Heart left ventricle (tissue), 16 donors: ENCODE measurements at regions of chr7 and their contacts with region 1.

Region 1: GRCh38 chr7:50679218-50680007 is 103.3 kb downstream of the GRB10 start:
- DNase-seq: no peak
- ATAC-seq: peak; percentile 72 to 77 (median 73)
- H3K4me3 ChIP-seq: no peak overlapping the region
- H3K27ac ChIP-seq: peak overlapping the region in 2 of 12 donors; percentile 1 to 72
- H3K4me1 ChIP-seq: peaks cover 0 to 80% (median 57%) of the 10 kb centered on the region in 12 donors
- H3K27me3 ChIP-seq: no peaks in the 10 kb centered on the region
- CTCF ChIP-seq: peak in 11 of 12 donors; percentile 21 to 60 (median 47)
- POLR2A ChIP-seq: no peak

Region 2: DNA sequence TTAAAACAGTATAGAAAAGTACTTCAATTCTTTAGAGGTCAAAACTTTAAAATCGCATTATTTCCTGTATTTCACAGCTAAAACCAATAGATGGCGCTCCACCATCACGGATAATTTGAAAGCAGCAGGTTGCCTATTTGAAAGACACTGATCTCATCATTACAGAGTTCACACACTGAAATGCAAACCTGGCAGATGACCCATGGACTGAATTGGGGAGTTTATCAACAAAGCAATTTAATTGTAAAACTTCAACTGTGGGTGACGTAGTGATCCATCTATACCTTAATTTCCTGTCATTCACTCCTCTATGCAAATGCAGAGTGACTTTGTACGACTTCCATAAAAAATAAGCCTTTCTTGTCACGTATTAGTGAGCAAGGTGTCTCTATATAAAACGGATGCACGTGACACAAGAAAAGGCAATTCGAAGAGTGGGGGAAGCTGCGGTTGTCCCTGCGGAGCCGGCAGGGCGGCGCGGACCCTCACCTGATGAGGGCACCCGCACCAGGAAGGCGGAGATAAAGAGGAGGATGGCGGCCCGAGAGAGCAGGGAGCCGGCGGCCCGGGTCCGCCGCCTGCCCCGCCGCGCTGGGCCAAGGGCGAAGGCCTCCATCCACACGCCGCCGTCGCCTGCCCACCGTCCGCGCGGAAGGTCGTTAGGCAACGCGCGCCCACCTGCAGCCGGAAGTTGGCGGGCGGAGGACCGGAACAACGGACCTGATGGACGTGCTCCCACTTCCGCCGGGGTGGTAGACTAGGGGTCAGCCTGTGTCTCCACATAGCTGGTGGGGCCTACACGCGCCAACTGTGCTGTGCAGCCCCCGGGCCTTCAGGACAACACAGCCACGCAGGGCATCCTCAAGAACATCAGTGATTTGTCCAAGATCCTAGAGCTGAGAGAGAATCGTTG is 586.6 kb before region 1 on chr7 and contains the start of gene ZPBP:
- intact Hi-C with region 1: loop called in 1 of 10 experiments (anchors 10 kb)
- DNase-seq: peak in 4 of 5 donors; percentile 10 to 66 (median 24)
- ATAC-seq: peak in 2 of 4 donors; percentile 22 to 38
- H3K4me3 ChIP-seq: peak within 1 kb of the TSS; percentile 22 to 58 (median 46)
- H3K27ac ChIP-seq: no peak within 1 kb of the TSS
- H3K4me1 ChIP-seq: peaks cover 0 to 6% (median 0%) of the 10 kb centered on the region in 12 donors
- H3K27me3 ChIP-seq: peaks cover 0 to 17% (median 0%) of the 10 kb centered on the region in 9 donors
- CTCF ChIP-seq: peak; percentile 55 to 80 (median 70)
- POLR2A ChIP-seq: no peak
- total RNA-seq, gene ZPBP: not detected

Region 3: DNA sequence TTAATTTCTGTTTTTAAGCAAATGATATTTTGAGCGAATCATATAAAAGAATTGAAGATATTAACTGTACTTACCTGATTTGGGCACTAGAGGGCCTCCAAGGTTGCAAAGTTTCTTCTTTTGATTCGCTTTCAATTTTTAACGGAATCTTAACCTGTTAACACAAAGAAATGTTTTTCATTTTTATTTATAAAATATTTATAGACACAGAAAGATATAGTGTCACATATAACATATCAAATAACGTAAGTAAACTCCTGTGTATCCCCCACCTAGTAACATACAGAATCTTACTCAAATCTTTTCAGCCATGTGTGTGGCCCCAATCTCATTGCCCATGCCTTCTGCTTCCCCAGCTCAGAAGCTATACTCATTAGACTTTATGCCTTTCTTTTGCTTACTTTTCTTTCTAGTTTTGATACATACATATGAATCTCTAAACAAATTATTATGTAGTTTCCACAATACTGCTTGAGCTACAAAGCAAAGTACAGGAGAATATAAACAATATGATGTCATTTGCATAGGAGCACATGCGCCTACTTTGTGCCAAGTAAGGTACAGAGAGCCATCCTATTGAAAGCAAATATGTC is 536.9 kb before region 1 on chr7:
- intact Hi-C with region 1: loop called in 1 of 10 experiments (anchors 10 kb)
- DNase-seq: no peak
- ATAC-seq: no peak
- H3K4me3 ChIP-seq: no peak overlapping the region
- H3K27ac ChIP-seq: no peak overlapping the region
- H3K4me1 ChIP-seq: peaks cover 0 to 4% (median 0%) of the 10 kb centered on the region in 12 donors
- H3K27me3 ChIP-seq: peaks cover 0 to 9% (median 0%) of the 10 kb centered on the region in 9 donors
- CTCF ChIP-seq: peak; percentile 54 to 81 (median 72)
- POLR2A ChIP-seq: no peak

Region 4: GRCh38 chr7:50206453-50207250 is 472.8 kb before region 1 on chr7:
- intact Hi-C with region 1: loop called in 1 of 10 experiments (anchors 5 kb)
- DNase-seq: no peak
- ATAC-seq: peak in 3 of 4 donors; percentile 24 to 63 (median 39)
- H3K4me3 ChIP-seq: no peak overlapping the region
- H3K27ac ChIP-seq: peak overlapping the region in 1 of 12 donors; percentile 52
- H3K4me1 ChIP-seq: peaks cover 0 to 48% (median 0%) of the 10 kb centered on the region in 12 donors
- H3K27me3 ChIP-seq: peaks cover 0 to 8% (median 0%) of the 10 kb centered on the region in 9 donors
- CTCF ChIP-seq: no peak
- POLR2A ChIP-seq: no peak

Region 5: DNA sequence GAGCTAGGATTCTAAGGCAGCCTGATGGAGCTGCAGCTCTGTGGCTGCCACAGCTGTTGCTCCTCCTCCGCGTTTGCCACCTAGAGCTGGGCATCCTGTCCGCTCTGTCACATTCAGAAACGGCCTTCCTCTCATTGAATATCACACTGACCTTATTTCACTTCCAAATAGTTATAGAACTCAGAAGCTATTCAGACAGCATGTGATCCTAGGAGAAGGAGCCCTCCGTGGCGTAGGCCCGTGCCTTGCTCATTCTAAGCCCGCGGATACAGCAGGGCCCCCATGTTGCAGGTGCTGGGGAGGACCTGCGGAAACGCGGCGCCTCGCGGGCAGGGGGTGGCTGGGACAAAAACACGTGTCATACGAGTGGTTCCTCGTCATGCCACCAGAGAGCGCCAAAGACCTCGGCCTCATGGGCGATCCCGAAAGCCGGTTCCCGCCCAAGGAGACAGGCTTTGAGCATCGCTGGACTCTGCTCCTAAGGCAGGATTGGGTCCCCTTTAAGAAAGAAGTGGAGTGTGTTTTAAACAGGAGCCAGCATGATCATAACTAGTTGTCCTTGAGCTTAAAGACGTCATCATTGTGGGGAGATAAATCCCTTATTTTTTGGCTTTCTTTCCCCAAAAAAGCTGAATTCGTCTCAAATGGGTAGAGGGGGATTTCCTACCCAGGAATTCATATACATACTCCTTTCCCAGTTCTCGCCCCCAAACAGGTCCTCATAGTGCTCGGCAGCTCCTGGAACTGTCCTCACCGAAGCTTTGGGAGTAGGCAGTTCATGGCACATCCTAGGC is 211.4 kb before region 1 on chr7:
- intact Hi-C with region 1: loop called (anchors 1 to 5 kb)
- DNase-seq: peak; percentile 72 to 89 (median 80)
- ATAC-seq: peak; percentile 70 to 97 (median 90)
- H3K4me3 ChIP-seq: peak overlapping the region in 1 of 12 donors; percentile 12
- H3K27ac ChIP-seq: no peak overlapping the region
- H3K4me1 ChIP-seq: peaks cover 0 to 8% (median 0%) of the 10 kb centered on the region in 12 donors
- H3K27me3 ChIP-seq: peaks cover 0 to 5% (median 0%) of the 10 kb centered on the region in 9 donors
- CTCF ChIP-seq: peak; percentile 85 to 96 (median 89)
- POLR2A ChIP-seq: no peak

Region 6: DNA sequence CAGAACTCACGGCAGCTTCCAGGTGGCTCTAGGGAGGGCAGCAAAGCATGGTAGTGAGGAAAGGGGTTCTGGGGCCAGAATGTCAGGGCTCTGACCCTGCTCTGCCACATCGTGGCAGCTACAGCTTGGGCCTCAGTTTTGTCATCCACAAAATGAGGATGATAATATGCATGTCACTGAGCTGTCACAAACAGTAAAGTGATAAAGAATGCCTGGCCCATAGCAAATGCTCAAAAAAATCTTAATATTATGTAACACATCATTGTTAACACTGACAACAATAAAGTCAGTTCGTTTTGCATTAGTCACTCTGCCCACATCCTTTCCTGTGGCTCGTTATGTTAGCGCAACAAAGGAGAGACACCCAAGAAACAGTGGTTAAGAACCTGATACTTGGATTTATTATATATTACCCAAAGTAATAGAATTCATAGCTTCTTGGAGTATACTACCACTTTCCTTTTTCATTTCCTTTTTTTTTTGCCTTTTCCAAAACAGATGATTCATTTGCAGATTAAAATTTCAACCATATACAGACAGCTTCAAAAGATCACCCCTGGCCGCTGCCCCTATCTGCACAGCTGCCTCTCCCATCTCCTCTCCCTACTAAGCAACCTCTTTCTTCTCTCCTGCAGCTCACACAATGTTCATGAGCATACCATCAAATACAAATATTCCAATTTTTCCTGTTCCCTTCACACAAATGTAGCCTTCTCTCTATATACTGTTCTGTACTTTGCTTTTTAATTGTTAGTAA is 68.7 kb before region 1 on chr7:
- intact Hi-C with region 1: loop called (anchors 2 to 10 kb)
- DNase-seq: no peak
- ATAC-seq: no peak
- H3K4me3 ChIP-seq: no peak overlapping the region
- H3K27ac ChIP-seq: peak overlapping the region in 1 of 12 donors; percentile 62
- H3K4me1 ChIP-seq: peaks cover 0 to 27% (median 0%) of the 10 kb centered on the region in 12 donors
- H3K27me3 ChIP-seq: no peaks in the 10 kb centered on the region
- CTCF ChIP-seq: no peak
- POLR2A ChIP-seq: no peak

Region 7: DNA sequence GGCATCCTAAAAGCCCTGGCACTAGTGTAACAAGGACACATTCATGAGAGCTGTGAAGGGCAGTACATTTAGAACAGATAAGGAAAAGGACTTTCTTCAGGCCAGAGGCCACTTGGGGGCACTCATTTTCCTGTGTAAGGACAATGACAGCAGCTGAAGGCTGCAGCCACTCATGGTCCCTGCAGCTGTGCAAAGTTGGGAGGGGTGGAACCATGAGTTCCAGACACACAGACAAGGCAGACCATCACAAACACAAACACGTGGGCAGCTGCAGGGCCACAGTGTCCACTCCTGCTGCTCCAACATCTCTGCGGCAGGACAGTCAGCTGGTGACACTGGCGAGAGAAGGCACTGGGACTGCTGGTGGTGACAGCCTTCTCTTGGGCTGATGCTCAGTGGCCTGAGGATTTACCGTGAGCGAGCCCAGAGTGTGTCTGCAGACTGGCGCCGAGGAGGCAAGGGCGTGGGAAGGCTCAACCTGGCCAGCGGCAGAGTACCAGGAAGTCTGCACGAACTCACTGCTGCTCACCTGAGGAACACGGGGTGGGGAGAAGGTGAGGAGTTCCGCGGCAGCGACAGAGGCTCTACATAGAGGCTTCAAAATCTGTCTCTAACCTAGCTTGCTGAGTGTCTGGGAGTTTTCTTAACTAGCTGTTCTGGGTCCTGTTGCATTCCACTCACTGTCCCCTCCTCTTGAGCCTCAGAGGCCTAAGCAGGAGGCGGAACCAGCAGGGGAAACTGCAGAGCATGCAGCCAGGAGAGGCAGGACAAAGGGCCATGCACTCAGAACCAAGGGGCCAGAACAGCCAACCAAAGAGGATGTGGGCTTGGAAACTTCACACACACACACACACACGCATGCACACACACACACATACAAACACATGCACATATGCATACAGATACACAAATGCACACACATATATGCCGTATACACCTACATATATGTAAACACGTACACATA is 37.7 kb before region 1 on chr7:
- intact Hi-C with region 1: loop called in 1 of 10 experiments (anchors 5 kb)
- DNase-seq: peak in 4 of 5 donors; percentile 47 to 72 (median 58)
- ATAC-seq: peak; percentile 91 to 94 (median 92)
- H3K4me3 ChIP-seq: no peak overlapping the region
- H3K27ac ChIP-seq: peak overlapping the region in 9 of 12 donors; percentile 22 to 72 (median 53)
- H3K4me1 ChIP-seq: peaks cover 0 to 36% (median 11%) of the 10 kb centered on the region in 12 donors
- H3K27me3 ChIP-seq: no peaks in the 10 kb centered on the region
- CTCF ChIP-seq: peak in 10 of 12 donors; percentile 9 to 53 (median 36)
- POLR2A ChIP-seq: no peak

Region 8: GRCh38 chr7:50793115-50793946 is 113.9 kb after region 1 on chr7:
- intact Hi-C with region 1: no loop called
- DNase-seq: peak; percentile 82 to 87 (median 84)
- ATAC-seq: peak; percentile 44 to 88 (median 76)
- H3K4me3 ChIP-seq: peak overlapping the region in 11 of 12 donors; percentile 36 to 94 (median 70)
- H3K27ac ChIP-seq: peak overlapping the region; percentile 64 to 94 (median 85)
- H3K4me1 ChIP-seq: peaks cover 3 to 46% (median 27%) of the 10 kb centered on the region in 12 donors
- H3K27me3 ChIP-seq: no peaks in the 10 kb centered on the region
- CTCF ChIP-seq: peak in 1 of 12 donors; percentile 1
- POLR2A ChIP-seq: peak in 1 of 2 donors; percentile 20

Region 9: DNA sequence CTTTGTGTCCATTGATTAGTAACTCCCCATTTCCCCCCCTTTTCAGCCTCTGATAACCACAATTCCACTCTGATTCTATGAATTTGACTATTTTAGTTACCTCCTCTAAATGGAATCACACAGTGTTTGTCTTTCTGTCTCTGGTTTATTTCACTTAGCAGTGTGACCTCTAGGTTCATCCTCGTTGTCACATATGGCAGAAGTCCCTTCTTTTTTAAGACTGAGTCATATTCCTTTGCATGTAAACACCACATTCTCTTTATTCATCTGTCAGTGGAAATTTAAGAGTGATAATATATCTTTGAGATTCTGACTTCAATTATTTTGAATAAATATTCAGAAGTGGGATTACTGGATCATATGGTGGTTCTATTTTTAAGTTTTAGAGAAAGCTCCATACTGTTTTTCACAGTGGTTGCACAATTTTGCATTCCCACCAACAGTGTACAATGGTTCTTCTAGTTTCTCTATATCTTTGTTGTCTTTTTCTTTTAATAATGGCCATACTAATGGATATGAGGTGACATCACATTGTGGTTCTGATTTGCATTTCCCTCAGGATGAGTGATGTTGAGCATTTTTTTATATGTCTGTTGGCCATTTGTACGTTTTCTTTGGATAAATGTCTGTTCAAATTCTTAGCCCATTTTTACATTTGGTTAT is 229.3 kb after region 1 on chr7:
- intact Hi-C with region 1: no loop called
- DNase-seq: no peak
- ATAC-seq: no peak
- H3K4me3 ChIP-seq: no peak overlapping the region
- H3K27ac ChIP-seq: no peak overlapping the region
- H3K4me1 ChIP-seq: no peaks in the 10 kb centered on the region
- H3K27me3 ChIP-seq: no peaks in the 10 kb centered on the region
- CTCF ChIP-seq: no peak
- POLR2A ChIP-seq: no peak